ENCODE measurements at regions of chr2 and their contacts with region 1.

Region 1: GRCh38 chr2:181984814-181985631 is 630 bp upstream of the PPP1R1C start:
- DNase-seq: no peak
- ATAC-seq: peak; percentile 55 to 78 (median 70)
- H3K4me3 ChIP-seq: peak overlapping the region in 6 of 10 donors; percentile 19 to 47 (median 44)
- H3K27ac ChIP-seq: peak overlapping the region; percentile 11 to 87 (median 76)
- H3K4me1 ChIP-seq: peaks cover 0 to 32% (median 16%) of the 10 kb centered on the region in 9 donors
- H3K27me3 ChIP-seq: no peaks in the 10 kb centered on the region
- CTCF ChIP-seq: no peak

Region 2: DNA sequence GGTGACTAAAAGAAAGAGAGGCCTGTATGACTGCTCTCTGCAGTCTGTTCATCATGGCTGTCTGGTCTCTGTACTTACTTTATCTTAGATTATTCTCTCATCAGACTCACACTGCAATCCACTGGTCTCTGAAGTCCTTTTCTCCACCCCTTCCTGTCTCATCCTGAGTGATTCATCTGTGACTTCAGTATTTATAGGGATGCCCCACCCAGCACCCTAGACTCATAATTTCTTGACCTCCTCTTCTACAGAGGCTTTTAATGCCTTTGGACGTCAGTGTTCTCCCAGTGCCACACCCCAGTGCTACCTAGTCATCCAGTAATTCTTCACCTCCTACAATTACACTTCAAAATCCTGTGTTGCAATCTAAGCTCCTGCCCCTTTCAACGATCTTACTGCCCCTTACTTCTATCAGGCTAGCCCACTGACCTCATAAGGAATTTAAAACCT is 108.4 kb before region 1 on chr2:
- intact Hi-C with region 1: no loop called
- DNase-seq: no peak
- ATAC-seq: peak in 2 of 8 donors; percentile 38 to 57
- H3K4me3 ChIP-seq: no peak overlapping the region
- H3K27ac ChIP-seq: no peak overlapping the region
- H3K4me1 ChIP-seq: peaks cover 0 to 8% (median 0%) of the 10 kb centered on the region in 9 donors
- H3K27me3 ChIP-seq: no peaks in the 10 kb centered on the region
- CTCF ChIP-seq: no peak

Region 3: GRCh38 chr2:182049372-182050148 is 64.5 kb after region 1 on chr2:
- intact Hi-C with region 1: loop called in 3 of 10 experiments (anchors 10 kb)
- DNase-seq: no peak
- ATAC-seq: peak in 7 of 8 donors; percentile 27 to 84 (median 64)
- H3K4me3 ChIP-seq: no peak overlapping the region
- H3K27ac ChIP-seq: peak overlapping the region in 5 of 10 donors; percentile 17 to 63 (median 31)
- H3K4me1 ChIP-seq: peaks cover 3 to 52% (median 10%) of the 10 kb centered on the region in 9 donors
- H3K27me3 ChIP-seq: no peaks in the 10 kb centered on the region
- CTCF ChIP-seq: no peak

Region 4: DNA sequence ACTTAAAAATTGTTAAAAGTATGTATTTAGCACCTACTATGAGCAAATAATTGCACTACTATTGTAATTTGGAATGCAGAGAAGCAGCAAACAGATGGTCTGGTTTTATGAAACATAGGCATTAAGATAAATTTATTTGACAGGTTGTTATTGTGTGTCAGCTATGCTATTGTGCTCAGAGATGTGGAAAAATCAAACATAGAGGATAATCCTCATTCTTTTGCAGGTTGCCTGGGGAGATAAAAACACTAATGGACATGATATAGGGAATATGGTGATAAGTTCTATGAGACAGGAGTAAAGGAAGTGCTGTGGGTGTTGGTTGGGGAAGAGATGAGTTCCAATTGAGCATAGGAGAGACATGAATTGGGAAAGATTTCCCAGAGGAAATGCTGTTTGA is 72.0 kb after region 1 on chr2:
- intact Hi-C with region 1: loop called in 3 of 10 experiments (anchors 5 to 10 kb)
- DNase-seq: no peak
- ATAC-seq: no peak
- H3K4me3 ChIP-seq: no peak overlapping the region
- H3K27ac ChIP-seq: peak overlapping the region in 2 of 10 donors; percentile 39 to 57
- H3K4me1 ChIP-seq: peaks cover 0 to 15% (median 3%) of the 10 kb centered on the region in 9 donors
- H3K27me3 ChIP-seq: no peaks in the 10 kb centered on the region
- CTCF ChIP-seq: no peak

Region 5: GRCh38 chr2:182066400-182067087 is 81.5 kb after region 1 on chr2:
- intact Hi-C with region 1: loop called in 3 of 10 experiments (anchors 5 to 10 kb)
- DNase-seq: no peak
- ATAC-seq: peak in 1 of 8 donors; percentile 42
- H3K4me3 ChIP-seq: no peak overlapping the region
- H3K27ac ChIP-seq: peak overlapping the region in 2 of 10 donors; percentile 9 to 12
- H3K4me1 ChIP-seq: peaks cover 3 to 41% (median 24%) of the 10 kb centered on the region in 9 donors
- H3K27me3 ChIP-seq: no peaks in the 10 kb centered on the region
- CTCF ChIP-seq: no peak